ENCODE measurements at regions of chr11 and their contacts with region 1.

Region 1: DNA sequence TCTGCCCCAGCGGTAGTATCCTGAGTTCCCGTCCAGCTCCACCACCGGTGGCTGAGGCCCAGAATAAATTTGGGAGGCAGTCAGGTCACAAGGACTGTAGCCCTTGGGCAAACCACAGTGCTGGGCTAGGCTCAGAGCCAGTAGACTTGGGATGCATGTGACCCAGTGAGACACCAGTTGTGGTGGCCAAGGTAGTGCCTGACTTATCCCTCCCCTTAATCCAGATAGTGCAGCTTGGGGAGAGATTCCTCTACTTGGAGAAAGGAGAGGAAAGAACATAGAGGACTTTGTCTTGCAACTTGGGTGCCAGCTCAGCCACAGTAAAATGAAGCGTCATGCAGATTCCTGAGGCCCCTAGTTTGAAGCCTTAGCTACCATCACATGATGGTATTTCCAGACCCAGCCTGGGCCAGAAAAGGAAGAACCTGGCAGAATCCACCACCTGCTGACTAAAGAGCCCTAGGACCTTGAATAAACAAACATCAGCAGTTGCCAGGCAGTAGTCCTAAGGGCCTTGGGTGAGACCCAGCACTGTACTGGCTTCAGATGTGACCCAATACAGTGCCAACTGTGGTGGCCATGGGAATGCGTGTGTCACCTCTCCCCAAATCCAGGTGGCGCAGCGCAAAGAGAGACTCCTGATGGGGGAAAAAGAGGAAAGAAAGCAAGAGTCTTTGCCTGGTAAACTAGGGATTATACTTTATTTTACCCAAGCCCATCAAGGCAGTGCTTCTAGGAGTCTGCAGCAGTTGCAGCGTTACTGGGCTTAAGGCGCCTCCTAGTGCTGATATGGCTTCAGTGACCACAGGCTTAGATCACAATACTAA is 17.0 kb upstream of the DDX10 start:
- DNase-seq: peak; percentile 77
- H3K4me3 ChIP-seq: no peak overlapping the region
- H3K27ac ChIP-seq: no peak overlapping the region
- H3K4me1 ChIP-seq: no peaks in the 10 kb centered on the region
- H3K27me3 ChIP-seq: peaks cover 0 to 3% of the 10 kb centered on the region in 2 experiments
- CTCF ChIP-seq: peak; percentile 77 to 84
- POLR2A ChIP-seq: no peak

Region 2: DNA sequence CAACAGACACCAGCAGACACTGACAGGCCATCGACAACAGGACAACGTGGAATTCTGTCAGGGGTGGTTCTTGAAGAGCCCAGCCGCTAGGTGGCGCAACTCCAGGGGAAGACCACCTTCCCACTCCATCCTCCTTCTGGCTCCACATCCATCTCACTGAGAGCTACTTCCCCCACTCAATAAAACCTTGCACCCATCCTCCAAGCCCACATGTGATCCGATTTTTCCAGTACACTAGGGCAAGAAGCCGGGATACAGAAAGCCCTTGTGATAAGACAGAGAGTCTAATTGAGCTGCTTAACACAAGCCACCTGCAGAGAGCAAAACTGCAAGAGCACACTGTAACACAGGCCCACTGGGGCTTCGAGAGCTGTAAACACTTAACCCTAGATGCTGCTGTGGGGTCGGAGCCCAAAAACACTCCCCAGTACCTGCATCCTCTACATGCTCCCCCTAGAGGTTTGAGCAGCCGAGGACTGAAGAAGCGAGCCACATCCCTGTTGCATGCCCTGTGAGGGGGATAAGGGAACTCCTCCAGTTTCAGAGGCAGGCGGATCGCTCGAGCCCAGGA is 731.2 kb before region 1 on chr11:
- CTCF ChIA-PET with region 1: interaction called, 25 read pairs
- POLR2A ChIA-PET with region 1: no interaction called
- dilution Hi-C with region 1: no loop called
- intact Hi-C with region 1: loop called (anchors 2 kb)
- DNase-seq: no peak
- H3K4me3 ChIP-seq: no peak overlapping the region
- H3K27ac ChIP-seq: no peak overlapping the region
- H3K4me1 ChIP-seq: no peaks in the 10 kb centered on the region
- H3K27me3 ChIP-seq: no peaks in the 10 kb centered on the region
- CTCF ChIP-seq: peak in 1 of 2 donors; percentile 65
- POLR2A ChIP-seq: no peak

Region 3: DNA sequence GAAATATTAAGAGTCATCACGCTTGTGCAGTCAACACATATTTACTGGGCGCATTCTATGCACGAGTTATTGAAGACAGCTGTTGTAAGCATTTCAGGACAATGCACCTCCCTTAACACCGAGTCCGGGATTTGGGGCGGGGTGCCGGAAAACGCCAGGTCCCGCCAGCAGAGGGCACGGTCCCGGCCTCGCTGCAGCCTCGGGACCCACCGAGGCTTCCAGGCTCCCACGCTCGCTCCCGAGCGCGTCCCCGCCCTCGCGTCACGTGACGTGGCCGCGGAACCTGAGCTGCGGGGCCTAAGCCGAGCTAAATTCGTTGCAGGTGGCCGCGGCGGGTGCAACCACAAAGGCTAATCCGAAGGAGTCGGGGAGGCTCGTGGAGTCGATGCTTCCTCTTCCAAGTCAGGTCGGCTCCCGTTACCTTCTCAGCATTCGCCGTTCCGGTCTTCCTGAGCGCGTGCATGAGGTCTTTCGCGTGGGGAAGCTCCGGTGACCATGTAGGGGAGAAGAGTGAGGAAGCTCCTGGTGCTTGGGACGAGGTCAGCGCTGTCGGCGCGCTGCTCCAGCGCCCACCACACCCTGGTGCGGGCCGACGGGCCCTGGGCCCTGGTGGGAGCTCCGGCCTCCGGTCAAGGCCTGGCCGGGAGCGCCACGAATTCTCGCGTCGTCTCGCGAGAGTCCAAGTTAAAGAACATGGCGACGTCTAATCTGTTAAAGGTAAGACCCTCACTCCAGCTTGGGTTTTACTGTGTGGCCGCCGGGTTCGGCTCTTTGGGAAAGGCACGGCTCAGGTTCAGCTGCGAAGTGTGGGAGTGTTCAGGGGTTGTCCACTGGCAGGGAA is 639.0 kb before region 1 on chr11 and contains the start of gene CUL5:
- CTCF ChIA-PET with region 1: interaction called, 15 read pairs
- POLR2A ChIA-PET with region 1: no interaction called
- dilution Hi-C with region 1: no loop called
- intact Hi-C with region 1: loop called (anchors 2 kb)
- DNase-seq: peak; percentile 90
- H3K4me3 ChIP-seq: peak within 1 kb of the TSS; percentile 44 to 88 (median 60)
- H3K27ac ChIP-seq: peak within 1 kb of the TSS; percentile 75
- H3K4me1 ChIP-seq: peaks cover 12% of the 10 kb centered on the region
- H3K27me3 ChIP-seq: no peaks in the 10 kb centered on the region
- CTCF ChIP-seq: peak; percentile 91 to 96
- POLR2A ChIP-seq: peak; percentile 91
- total RNA-seq, gene CUL5: 36.6 and 37.6 TPM in 2 replicates

Region 4: DNA sequence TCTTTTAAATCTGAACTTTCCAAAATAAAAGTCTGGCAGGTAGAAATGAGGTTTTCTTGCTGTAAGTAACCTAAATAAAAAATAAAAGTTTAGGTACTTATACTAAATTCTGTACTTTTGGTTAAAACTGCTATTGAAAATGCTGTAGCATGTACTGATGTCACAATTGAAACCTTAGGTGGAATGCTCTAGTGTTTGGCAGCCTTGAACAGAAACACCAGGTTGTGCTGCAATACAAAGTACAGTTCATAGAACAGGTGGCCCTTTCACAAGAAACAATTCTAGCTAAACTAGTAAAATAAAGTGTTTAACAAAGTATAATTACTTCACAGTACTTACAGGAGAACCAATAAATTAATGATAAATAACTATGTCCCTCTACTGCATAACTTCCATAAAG is 450.6 kb before region 1 on chr11:
- CTCF ChIA-PET with region 1: no interaction called
- POLR2A ChIA-PET with region 1: no interaction called
- dilution Hi-C with region 1: no loop called
- intact Hi-C with region 1: loop called (anchors 2 kb)
- DNase-seq: no peak
- H3K4me3 ChIP-seq: no peak overlapping the region
- H3K27ac ChIP-seq: no peak overlapping the region
- H3K4me1 ChIP-seq: no peaks in the 10 kb centered on the region
- H3K27me3 ChIP-seq: no peaks in the 10 kb centered on the region
- CTCF ChIP-seq: no peak
- POLR2A ChIP-seq: no peak

Region 5: DNA sequence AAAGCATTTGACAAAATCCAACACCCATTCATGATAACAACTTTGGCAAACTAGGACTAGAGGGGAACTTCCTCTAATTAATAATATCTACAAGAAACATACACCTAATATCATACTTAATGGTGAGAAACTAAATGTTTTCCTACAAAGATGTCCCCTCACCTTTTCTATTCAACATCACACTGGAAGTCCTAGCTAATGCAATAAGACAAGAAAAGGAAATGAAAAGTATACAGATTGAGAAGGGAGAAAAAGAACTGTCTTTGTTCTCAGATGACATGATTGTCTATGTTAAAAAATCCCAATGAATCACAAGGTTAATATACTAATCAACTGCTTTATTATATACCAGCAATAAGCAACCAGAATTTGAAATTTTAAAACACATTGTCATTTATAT is 233.0 kb before region 1 on chr11:
- CTCF ChIA-PET with region 1: interaction called, 5 read pairs
- POLR2A ChIA-PET with region 1: no interaction called
- dilution Hi-C with region 1: no loop called
- intact Hi-C with region 1: loop called (anchors 1 kb)
- DNase-seq: no peak
- H3K4me3 ChIP-seq: no peak overlapping the region
- H3K27ac ChIP-seq: no peak overlapping the region
- H3K4me1 ChIP-seq: no peaks in the 10 kb centered on the region
- H3K27me3 ChIP-seq: no peaks in the 10 kb centered on the region
- CTCF ChIP-seq: no peak
- POLR2A ChIP-seq: no peak

Region 6: DNA sequence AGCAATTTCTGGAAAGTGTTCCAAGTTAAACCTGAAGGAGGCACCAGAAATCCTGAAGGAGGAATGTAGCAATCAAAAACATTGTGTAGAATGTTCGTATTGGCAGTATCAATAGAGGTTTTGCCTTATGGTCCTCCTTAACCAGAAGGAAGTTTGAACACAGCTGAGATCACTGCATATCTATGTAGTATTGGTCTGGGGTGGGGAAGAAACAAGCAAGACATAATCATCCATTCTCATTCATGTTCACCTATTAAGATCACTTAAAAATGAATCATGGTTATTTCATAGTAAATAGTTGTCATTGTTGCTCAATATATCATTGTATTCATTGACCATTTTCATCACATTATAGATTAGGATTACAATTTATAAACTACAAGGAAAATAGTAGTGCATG is 177.5 kb after region 1 on chr11:
- CTCF ChIA-PET with region 1: no interaction called
- POLR2A ChIA-PET with region 1: no interaction called
- dilution Hi-C with region 1: no loop called
- intact Hi-C with region 1: no loop called
- DNase-seq: peak; percentile 13
- H3K4me3 ChIP-seq: no peak overlapping the region
- H3K27ac ChIP-seq: no peak overlapping the region
- H3K4me1 ChIP-seq: peaks cover 9% of the 10 kb centered on the region
- H3K27me3 ChIP-seq: no peaks in the 10 kb centered on the region
- CTCF ChIP-seq: no peak
- POLR2A ChIP-seq: no peak

Measured in endothelial cell of umbilical vein (primary cell).